ENCODE measurements at regions of chr1 and their contacts with region 1.

Region 1: DNA sequence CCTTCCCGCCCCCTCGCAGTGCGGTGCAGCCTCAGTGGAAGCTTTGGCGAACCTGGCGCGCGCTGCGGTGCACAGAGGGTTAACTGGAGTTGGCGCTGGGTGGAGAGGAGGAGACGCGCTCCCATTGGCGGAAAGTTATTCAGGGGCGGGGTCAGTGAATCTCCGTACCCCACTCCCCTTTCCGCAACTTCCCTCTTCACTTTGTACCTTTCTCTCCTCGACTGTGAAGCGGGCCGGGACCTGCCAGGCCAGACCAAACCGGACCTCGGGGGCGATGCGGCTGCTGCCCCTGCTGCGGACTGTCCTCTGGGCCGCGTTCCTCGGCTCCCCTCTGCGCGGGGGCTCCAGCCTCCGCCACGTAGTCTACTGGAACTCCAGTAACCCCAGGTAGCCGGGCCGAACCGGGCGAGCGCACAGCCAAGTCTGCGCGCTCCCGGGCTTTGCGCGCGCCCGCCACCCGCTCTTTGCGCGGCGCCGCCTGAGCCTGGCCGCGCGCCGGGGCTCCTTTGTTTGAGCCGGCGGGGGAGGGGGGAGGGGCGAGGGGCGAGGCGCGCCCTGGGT is at the start of gene EFNA4:
- DNase-seq: peak; percentile 95
- H3K4me3 ChIP-seq: peak within 1 kb of the TSS; percentile 90
- H3K27ac ChIP-seq: peak within 1 kb of the TSS; percentile 88
- H3K4me1 ChIP-seq: peaks cover 19% of the 10 kb centered on the region
- H3K27me3 ChIP-seq: no peaks in the 10 kb centered on the region
- CTCF ChIP-seq: no peak
- total RNA-seq, gene EFNA4: 26.1 to 27.2 TPM

Region 2: GRCh38 chr1:154906621-154907081 is 157.0 kb before region 1 on chr1:
- intact Hi-C with region 1: loop called (anchors 5 kb)
- DNase-seq: peak; percentile 23
- H3K4me3 ChIP-seq: no peak overlapping the region
- H3K27ac ChIP-seq: no peak overlapping the region
- H3K4me1 ChIP-seq: no peaks in the 10 kb centered on the region
- H3K27me3 ChIP-seq: no peaks in the 10 kb centered on the region
- CTCF ChIP-seq: peak; percentile 52

Region 3: GRCh38 chr1:155084722-155085503 is 21.3 kb after region 1 on chr1:
- intact Hi-C with region 1: loop called (anchors 1 kb)
- DNase-seq: peak; percentile 96
- H3K4me3 ChIP-seq: peak overlapping the region; percentile 56
- H3K27ac ChIP-seq: peak overlapping the region; percentile 95
- H3K4me1 ChIP-seq: peaks cover 40% of the 10 kb centered on the region
- H3K27me3 ChIP-seq: peaks cover 23% of the 10 kb centered on the region
- CTCF ChIP-seq: peak; percentile 81